A549 (cell line): ENCODE measurements at regions of chr11 and their contacts with region 1.

Region 1: DNA sequence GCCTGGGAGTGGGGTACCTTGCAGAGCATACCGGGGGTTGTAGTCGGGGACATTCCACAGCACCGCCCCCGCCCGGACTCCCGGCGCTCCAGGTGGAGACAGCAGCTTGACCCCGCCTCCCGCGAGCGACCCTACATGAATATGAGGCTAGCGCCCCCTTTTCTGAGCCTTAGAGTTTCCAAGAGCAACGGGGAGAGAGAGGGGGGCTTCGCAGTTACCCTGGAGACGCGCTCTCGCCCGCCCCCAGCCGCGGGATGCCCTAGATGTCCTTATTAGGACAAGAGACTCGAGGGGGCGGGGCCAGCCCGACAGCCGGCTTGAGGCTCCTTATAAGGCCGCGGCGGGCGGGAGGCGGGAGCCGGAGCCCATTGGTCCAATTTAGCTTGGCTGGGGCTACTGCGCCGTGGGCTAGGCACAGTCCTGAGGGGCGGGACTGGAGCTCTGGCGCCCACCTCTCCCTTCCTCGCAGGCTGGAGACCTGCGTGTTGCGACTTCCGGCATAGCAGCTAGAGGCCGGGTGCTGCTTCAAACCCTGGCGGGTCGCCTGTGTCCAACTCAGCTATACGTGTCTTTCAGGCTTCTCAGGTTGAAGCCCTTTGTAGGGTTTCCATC is 927 bp upstream of the MUS81 start:
- DNase-seq: peak; percentile 97 to 99
- ATAC-seq: peak; percentile 57 to 82
- H3K4me3 ChIP-seq: peak overlapping the region; percentile 70
- H3K27ac ChIP-seq: peak overlapping the region; percentile 88 to 96
- H3K4me1 ChIP-seq: peaks cover 30% of the 10 kb centered on the region
- CTCF ChIP-seq: no peak
- EP300 ChIP-seq: no peak
- POLR2A ChIP-seq: peak; percentile 71
- RAD21 ChIP-seq: no peak

Region 2: DNA sequence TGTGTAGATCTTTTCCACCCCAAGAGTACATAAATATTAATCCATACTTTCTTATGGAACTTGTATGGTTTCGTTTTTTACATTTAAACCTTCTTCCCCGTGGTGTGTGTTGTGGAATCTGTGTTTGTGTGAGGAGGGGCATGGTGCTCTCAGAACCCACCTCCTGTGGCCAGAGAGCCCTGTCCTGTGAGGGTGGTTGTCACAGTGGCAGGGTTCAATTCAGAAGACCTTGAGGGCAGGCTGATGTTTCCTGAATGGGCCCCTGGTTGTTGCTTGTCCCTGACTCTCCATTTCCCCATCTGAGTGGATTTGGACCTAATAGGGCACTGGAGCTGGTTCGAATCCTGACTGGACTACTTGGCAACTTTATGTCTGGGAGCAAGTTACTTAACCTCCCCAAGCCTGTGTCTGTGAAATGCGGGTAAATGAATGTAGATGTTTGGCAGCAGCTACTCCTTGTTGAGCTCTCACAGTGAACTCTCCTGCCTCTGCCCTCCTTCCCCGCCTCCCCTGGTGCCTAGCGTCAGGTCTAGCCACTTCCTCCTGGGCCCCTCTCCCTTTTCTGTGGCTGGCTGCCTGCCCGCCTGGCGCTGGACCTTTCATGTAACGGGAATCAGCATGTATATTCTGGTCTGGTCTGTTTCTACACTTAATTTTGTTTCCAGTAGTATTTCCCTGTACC is 429.4 kb before region 1 on chr11:
- CTCF ChIA-PET with region 1: no interaction called
- POLR2A ChIA-PET with region 1: no interaction called
- DNase-seq: peak in 1 of 2 experiments; percentile 85
- ATAC-seq: peak; percentile 21 to 28
- H3K4me3 ChIP-seq: peak overlapping the region; percentile 95; the same call in 2 of the 3 replicates
- H3K27ac ChIP-seq: peak overlapping the region; percentile 97 to 100
- H3K4me1 ChIP-seq: peaks cover 55% of the 10 kb centered on the region
- CTCF ChIP-seq: no peak
- EP300 ChIP-seq: no peak
- POLR2A ChIP-seq: peak; percentile 56
- RAD21 ChIP-seq: no peak

Region 3: GRCh38 chr11:65720237-65720934 is 138.9 kb before region 1 on chr11 and contains the start of gene RNASEH2C:
- CTCF ChIA-PET with region 1: interaction called, 4 read pairs
- POLR2A ChIA-PET with region 1: interaction called, 17 read pairs
- DNase-seq: peak; percentile 89
- ATAC-seq: peak; percentile 82 to 93
- H3K4me3 ChIP-seq: peak within 1 kb of the TSS; percentile 67
- H3K27ac ChIP-seq: peak within 1 kb of the TSS; percentile 77 to 96
- H3K4me1 ChIP-seq: peaks cover 9% of the 10 kb centered on the region
- CTCF ChIP-seq: no peak
- EP300 ChIP-seq: no peak
- POLR2A ChIP-seq: peak; percentile 95
- RAD21 ChIP-seq: no peak
- polyA plus RNA-seq, gene RNASEH2C: 15.1 and 15.8 TPM in 2 replicates

Region 4: GRCh38 chr11:65873318-65874156 is 14.2 kb after region 1 on chr11:
- CTCF ChIA-PET with region 1: interaction called, 78 read pairs
- POLR2A ChIA-PET with region 1: interaction called, 15 read pairs
- DNase-seq: peak; percentile 92 to 95
- ATAC-seq: peak; percentile 60 to 79
- H3K4me3 ChIP-seq: peak overlapping the region; percentile 55
- H3K27ac ChIP-seq: peak overlapping the region; percentile 82 to 84
- H3K4me1 ChIP-seq: peaks cover 6% of the 10 kb centered on the region
- CTCF ChIP-seq: no peak
- EP300 ChIP-seq: no peak
- POLR2A ChIP-seq: peak; percentile 86
- RAD21 ChIP-seq: no peak

Region 5: DNA sequence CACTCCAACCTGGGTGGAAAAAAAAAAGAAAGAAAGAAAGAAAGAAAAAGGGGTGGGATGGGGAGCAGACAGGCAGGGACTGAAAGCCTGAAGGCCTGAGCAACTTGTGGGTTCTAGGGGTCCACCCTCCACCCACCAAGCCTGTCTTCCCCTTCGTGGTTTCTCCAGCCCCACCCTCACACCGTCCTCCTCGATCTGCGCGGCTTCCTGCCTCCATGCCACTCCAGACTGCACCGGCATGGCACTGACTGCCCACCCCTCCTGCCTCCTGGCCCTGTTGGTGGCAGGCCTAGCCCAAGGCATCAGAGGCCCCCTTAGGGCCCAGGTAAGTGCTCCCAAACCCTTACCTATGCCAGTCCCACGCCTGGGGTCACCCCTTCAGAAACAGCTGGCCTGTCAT is 20.3 kb after region 1 on chr11 and contains the start of gene CTSW:
- CTCF ChIA-PET with region 1: interaction called, 195 read pairs
- POLR2A ChIA-PET with region 1: interaction called, 14 read pairs
- DNase-seq: no peak
- ATAC-seq: no peak
- H3K4me3 ChIP-seq: no peak within 1 kb of the TSS
- H3K27ac ChIP-seq: no peak within 1 kb of the TSS
- H3K4me1 ChIP-seq: no peaks in the 10 kb centered on the region
- CTCF ChIP-seq: no peak
- EP300 ChIP-seq: no peak
- POLR2A ChIP-seq: no peak
- RAD21 ChIP-seq: no peak
- polyA plus RNA-seq, gene CTSW: not detected in 2 replicates

Region 6: DNA sequence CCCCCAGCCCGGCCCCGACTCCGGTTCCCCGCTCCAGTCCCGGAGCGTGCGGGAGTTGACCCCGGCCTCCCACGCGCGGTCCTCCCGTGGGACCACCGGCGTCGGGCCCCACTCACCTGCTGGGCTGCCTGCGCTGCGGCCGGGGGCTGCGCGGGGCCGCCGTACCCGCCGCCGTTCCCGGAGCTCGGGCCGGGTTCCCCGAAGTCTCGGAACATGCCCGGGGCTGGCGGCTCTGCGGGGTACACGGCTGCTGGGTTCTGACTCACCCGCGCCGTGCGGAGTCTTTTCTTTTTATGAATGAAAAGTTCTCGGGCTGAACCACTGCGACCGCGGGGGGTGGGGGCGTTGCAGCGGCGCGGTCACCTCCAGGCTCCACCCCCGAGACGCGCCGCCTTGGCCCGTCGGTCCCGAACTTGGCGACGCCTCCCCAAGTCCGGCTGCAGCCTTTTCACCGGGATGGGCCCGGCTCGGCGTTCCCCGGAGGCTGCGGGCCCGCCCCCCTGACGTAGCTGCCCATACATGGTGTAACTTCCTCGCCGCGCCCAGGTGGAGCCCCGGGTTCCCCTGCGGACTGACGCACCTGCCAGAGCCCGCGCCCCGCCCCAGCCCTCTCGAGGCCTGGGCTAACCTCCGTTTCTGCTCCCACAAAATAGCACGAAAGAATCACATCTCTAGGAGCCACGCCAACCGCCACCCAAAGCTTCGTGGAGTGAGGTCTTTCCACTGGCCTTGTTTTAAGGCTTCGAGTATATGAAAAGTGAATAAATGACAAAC is 41.0 kb after region 1 on chr11 and contains the start of gene FOSL1:
- CTCF ChIA-PET with region 1: interaction called, 10 read pairs
- POLR2A ChIA-PET with region 1: interaction called, 4 read pairs
- DNase-seq: peak; percentile 91 to 99
- ATAC-seq: peak; percentile 74 to 79
- H3K4me3 ChIP-seq: peak within 1 kb of the TSS; percentile 93
- H3K27ac ChIP-seq: peak within 1 kb of the TSS; percentile 97
- H3K4me1 ChIP-seq: peaks cover 59% of the 10 kb centered on the region
- CTCF ChIP-seq: no peak
- EP300 ChIP-seq: no peak
- POLR2A ChIP-seq: peak; percentile 78
- RAD21 ChIP-seq: no peak; a peak in 1 of 5 replicates
- polyA plus RNA-seq, gene FOSL1: 6.7 and 9.6 TPM in 2 replicates

Region 7: DNA sequence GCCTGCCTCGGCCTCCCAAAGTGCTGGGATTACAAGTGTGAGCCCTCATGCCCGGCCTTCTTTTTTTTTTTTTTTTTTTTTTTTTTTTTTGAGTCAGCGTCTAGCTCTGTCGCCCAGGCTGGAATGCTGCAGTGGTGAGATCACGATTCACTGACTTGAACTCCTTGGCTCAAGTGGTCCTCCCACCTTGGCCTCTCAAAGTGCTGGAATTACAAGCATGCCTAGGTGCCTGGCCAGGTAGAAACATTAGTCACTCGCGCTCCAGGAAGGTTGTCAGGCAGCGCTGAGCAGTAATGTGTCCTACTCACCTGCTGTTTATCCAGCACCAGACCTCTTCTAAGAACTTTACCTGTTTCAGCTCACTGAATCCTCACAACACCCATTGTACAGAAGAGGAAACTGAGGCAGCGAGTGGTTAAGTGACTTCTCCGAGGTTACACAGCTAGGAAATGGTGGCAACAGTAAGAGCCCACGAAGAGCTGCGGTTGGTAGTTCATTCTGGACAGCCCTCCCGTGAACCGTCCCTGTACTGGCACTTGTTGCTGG is 152.0 kb after region 1 on chr11:
- CTCF ChIA-PET with region 1: no interaction called
- POLR2A ChIA-PET with region 1: no interaction called
- DNase-seq: no peak
- ATAC-seq: no peak
- H3K4me3 ChIP-seq: no peak overlapping the region
- H3K27ac ChIP-seq: no peak overlapping the region
- H3K4me1 ChIP-seq: peaks cover 16% of the 10 kb centered on the region
- CTCF ChIP-seq: no peak
- EP300 ChIP-seq: no peak
- POLR2A ChIP-seq: no peak
- RAD21 ChIP-seq: no peak